ENCODE measurements at regions of chr3 and their contacts with region 1.

Region 1: GRCh38 chr3:150603153-150603979 is at the start of gene SELENOT:
- DNase-seq: peak; percentile 91 to 97 (median 96)
- ATAC-seq: peak; percentile 89
- H3K4me3 ChIP-seq: peak within 1 kb of the TSS; percentile 76
- H3K4me3 Mint-ChIP-seq: peak within 1 kb of the TSS; percentile 93 to 100 (median 98)
- H3K27ac ChIP-seq: peak within 1 kb of the TSS; percentile 90
- H3K27ac Mint-ChIP-seq: peak within 1 kb of the TSS; percentile 97 to 100 (median 99)
- H3K4me1 ChIP-seq: peaks cover 27 to 41% of the 10 kb centered on the region in 2 donors
- H3K4me1 Mint-ChIP-seq: peaks cover 43 to 78% (median 70%) of the 10 kb centered on the region in 7 donors
- H3K27me3 ChIP-seq: no peaks in the 10 kb centered on the region
- H3K27me3 Mint-ChIP-seq: no peaks in the 10 kb centered on the region
- total RNA-seq, gene SELENOT: 51.3 to 104 (median 78.1) TPM

Region 2: GRCh38 chr3:149086232-149086988 is 1517.0 kb before region 1 on chr3 and contains the start of gene HLTF:
- CTCF ChIA-PET with region 1: no interaction called
- POLR2A ChIA-PET with region 1: no interaction called
- intact Hi-C with region 1: loop called in 1 of 2 experiments (anchors 1 kb)
- DNase-seq: peak; percentile 75 to 93 (median 90)
- ATAC-seq: peak; percentile 99
- H3K4me3 ChIP-seq: peak within 1 kb of the TSS; percentile 97
- H3K4me3 Mint-ChIP-seq: peak within 1 kb of the TSS; percentile 84 to 100 (median 97)
- H3K27ac ChIP-seq: peak within 1 kb of the TSS; percentile 64
- H3K27ac Mint-ChIP-seq: peak within 1 kb of the TSS; percentile 54 to 95 (median 86)
- H3K4me1 ChIP-seq: peaks cover 4 to 18% of the 10 kb centered on the region in 2 donors
- H3K4me1 Mint-ChIP-seq: peaks cover 15 to 28% (median 22%) of the 10 kb centered on the region in 7 donors
- H3K27me3 ChIP-seq: no peaks in the 10 kb centered on the region
- H3K27me3 Mint-ChIP-seq: no peaks in the 10 kb centered on the region
- total RNA-seq, gene HLTF: 9.1 to 26.5 (median 17.3) TPM

Region 3: GRCh38 chr3:150540991-150541390 is 62.4 kb before region 1 on chr3:
- CTCF ChIA-PET with region 1: no interaction called
- POLR2A ChIA-PET with region 1: interaction called, 53 read pairs
- intact Hi-C with region 1: loop called (anchors 1 kb)
- DNase-seq: no peak
- ATAC-seq: no peak
- H3K4me3 ChIP-seq: no peak overlapping the region
- H3K4me3 Mint-ChIP-seq: peak overlapping the region in 1 of 10 donors; percentile 10
- H3K27ac ChIP-seq: peak overlapping the region; percentile 41
- H3K27ac Mint-ChIP-seq: peak overlapping the region in 7 of 9 donors; percentile 45 to 98 (median 81)
- H3K4me1 ChIP-seq: peaks cover 6 to 7% of the 10 kb centered on the region in 2 donors
- H3K4me1 Mint-ChIP-seq: peaks cover 11 to 59% (median 45%) of the 10 kb centered on the region in 7 donors
- H3K27me3 ChIP-seq: no peaks in the 10 kb centered on the region
- H3K27me3 Mint-ChIP-seq: no peaks in the 10 kb centered on the region

Region 4: GRCh38 chr3:150589759-150590158 is 13.6 kb before region 1 on chr3:
- CTCF ChIA-PET with region 1: interaction called, 3 read pairs
- POLR2A ChIA-PET with region 1: interaction called, 13 read pairs
- intact Hi-C with region 1: loop called in 1 of 2 experiments (anchors 1 kb)
- DNase-seq: no peak
- ATAC-seq: no peak
- H3K4me3 ChIP-seq: no peak overlapping the region
- H3K4me3 Mint-ChIP-seq: peak overlapping the region in 1 of 10 donors; percentile 1
- H3K27ac ChIP-seq: no peak overlapping the region
- H3K27ac Mint-ChIP-seq: peak overlapping the region in 5 of 9 donors; percentile 14 to 62 (median 25)
- H3K4me1 ChIP-seq: no peaks in the 10 kb centered on the region
- H3K4me1 Mint-ChIP-seq: peaks cover 0 to 24% (median 6%) of the 10 kb centered on the region in 7 donors
- H3K27me3 ChIP-seq: no peaks in the 10 kb centered on the region
- H3K27me3 Mint-ChIP-seq: no peaks in the 10 kb centered on the region

Region 5: GRCh38 chr3:150721285-150722130 is 118.1 kb after region 1 on chr3:
- CTCF ChIA-PET with region 1: no interaction called
- POLR2A ChIA-PET with region 1: interaction called, 3 read pairs
- intact Hi-C with region 1: loop called in 1 of 2 experiments (anchors 1 kb)
- DNase-seq: peak in 7 of 9 donors; percentile 33 to 77 (median 70)
- ATAC-seq: peak; percentile 94
- H3K4me3 ChIP-seq: no peak overlapping the region
- H3K4me3 Mint-ChIP-seq: peak overlapping the region in 1 of 10 donors; percentile 3
- H3K27ac ChIP-seq: no peak overlapping the region
- H3K27ac Mint-ChIP-seq: no peak overlapping the region
- H3K4me1 ChIP-seq: no peaks in the 10 kb centered on the region
- H3K4me1 Mint-ChIP-seq: peaks cover 0 to 19% (median 9%) of the 10 kb centered on the region in 7 donors
- H3K27me3 ChIP-seq: no peaks in the 10 kb centered on the region
- H3K27me3 Mint-ChIP-seq: no peaks in the 10 kb centered on the region

Region 6: GRCh38 chr3:150887025-150887424 is 283.7 kb after region 1 on chr3:
- CTCF ChIA-PET with region 1: no interaction called
- POLR2A ChIA-PET with region 1: no interaction called
- intact Hi-C with region 1: no loop called
- DNase-seq: no peak
- ATAC-seq: no peak
- H3K4me3 ChIP-seq: no peak overlapping the region
- H3K4me3 Mint-ChIP-seq: no peak overlapping the region
- H3K27ac ChIP-seq: no peak overlapping the region
- H3K27ac Mint-ChIP-seq: no peak overlapping the region
- H3K4me1 ChIP-seq: no peaks in the 10 kb centered on the region
- H3K4me1 Mint-ChIP-seq: peaks cover 0 to 2% (median 0%) of the 10 kb centered on the region in 7 donors
- H3K27me3 ChIP-seq: no peaks in the 10 kb centered on the region
- H3K27me3 Mint-ChIP-seq: peaks cover 16 to 34% (median 27%) of the 10 kb centered on the region in 5 donors

Region 7: DNA sequence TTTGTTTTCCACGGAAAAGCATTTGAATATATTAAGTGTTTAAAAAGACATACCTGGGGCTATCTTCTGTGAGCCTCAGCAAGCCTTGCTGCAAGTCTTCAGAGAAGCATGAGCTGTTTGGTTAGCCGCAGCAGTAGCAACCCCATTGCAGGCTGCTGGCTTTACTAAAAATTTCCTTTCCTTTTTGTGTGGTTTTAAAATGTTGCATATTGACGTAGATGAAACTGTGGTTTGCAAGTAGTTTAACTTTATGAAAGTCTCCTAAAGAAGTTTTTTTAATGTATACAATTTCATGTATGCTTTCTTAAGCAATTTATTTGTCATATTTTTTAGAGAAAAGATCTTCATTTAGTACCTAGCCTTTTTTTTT is 599.7 kb after region 1 on chr3 and contains the start of gene GPR171:
- CTCF ChIA-PET with region 1: no interaction called
- POLR2A ChIA-PET with region 1: no interaction called
- intact Hi-C with region 1: loop called (anchors 5 kb)
- DNase-seq: peak in 8 of 9 donors; percentile 62 to 88 (median 82)
- ATAC-seq: peak; percentile 95
- H3K4me3 ChIP-seq: peak within 1 kb of the TSS; percentile 79
- H3K4me3 Mint-ChIP-seq: peak within 1 kb of the TSS; percentile 72 to 94 (median 84)
- H3K27ac ChIP-seq: peak within 1 kb of the TSS; percentile 75
- H3K27ac Mint-ChIP-seq: peak within 1 kb of the TSS; percentile 76 to 98 (median 94)
- H3K4me1 ChIP-seq: peaks cover 45 to 57% of the 10 kb centered on the region in 2 donors
- H3K4me1 Mint-ChIP-seq: peaks cover 34 to 82% (median 71%) of the 10 kb centered on the region in 7 donors
- H3K27me3 ChIP-seq: no peaks in the 10 kb centered on the region
- H3K27me3 Mint-ChIP-seq: no peaks in the 10 kb centered on the region
- total RNA-seq, gene GPR171: 16.0 to 251 (median 63.4) TPM

Measured in naive thymus-derived CD4-positive, alpha-beta T cell (primary cell).